Gastrocnemius medialis (tissue), 4 donors: ENCODE measurements at regions of chr14 and their contacts with region 1.

Region 1: DNA sequence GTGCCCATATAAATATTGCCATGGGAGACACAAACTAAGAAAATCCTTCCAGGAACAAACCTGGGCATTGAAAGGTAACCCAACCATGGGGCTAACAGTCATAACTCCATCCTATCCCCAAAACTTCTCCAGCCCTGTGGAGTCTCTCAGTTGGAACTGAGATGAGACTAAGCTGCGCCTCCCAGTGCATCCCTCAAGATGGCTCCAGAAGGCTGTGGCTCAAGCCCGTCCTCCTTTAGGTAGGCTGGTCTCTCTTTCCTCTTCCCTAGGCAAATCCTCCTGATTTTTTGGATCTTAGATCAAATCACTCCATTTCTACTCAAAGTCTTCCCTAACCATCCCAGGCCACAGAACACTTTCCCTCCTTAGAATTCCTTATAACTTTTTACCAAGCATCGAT is 364.3 kb upstream of the CCDC196 start:
- DNase-seq: no peak
- ATAC-seq: no peak
- H3K4me3 ChIP-seq: no peak overlapping the region
- H3K27ac ChIP-seq: no peak overlapping the region
- H3K4me1 ChIP-seq: no peaks in the 10 kb centered on the region
- H3K27me3 ChIP-seq: no peaks in the 10 kb centered on the region
- CTCF ChIP-seq: no peak
- POLR2A ChIP-seq: no peak

Region 2: GRCh38 chr14:65382586-65382985 is 739.3 kb before region 1 on chr14:
- in situ Hi-C with region 1: no loop called
- intact Hi-C with region 1: loop called (anchors 5 kb)
- DNase-seq: no peak
- ATAC-seq: no peak
- H3K4me3 ChIP-seq: no peak overlapping the region
- H3K27ac ChIP-seq: no peak overlapping the region
- H3K4me1 ChIP-seq: no peaks in the 10 kb centered on the region
- H3K27me3 ChIP-seq: no peaks in the 10 kb centered on the region
- CTCF ChIP-seq: no peak
- POLR2A ChIP-seq: no peak

Region 3: DNA sequence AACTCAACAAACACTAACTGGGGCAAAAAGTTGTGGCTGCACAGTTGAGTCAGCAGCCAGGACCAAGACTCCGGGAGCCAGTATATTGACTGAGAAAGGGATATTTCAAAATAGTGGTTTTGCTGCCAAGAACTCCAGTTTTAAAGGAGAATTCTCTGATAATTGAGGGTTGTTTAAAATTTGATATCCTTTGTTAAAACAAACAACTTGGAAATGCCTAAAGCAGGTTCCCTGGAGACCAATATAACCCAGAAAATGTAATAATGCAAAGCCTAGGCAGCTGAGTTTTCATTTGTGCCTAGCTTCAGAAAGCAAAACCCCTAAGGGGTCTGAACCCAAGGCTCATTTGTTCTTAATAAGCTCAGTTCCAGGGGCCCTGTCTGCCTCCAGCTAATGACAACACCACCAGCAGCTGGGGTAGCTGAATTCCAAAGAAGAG is 52.6 kb after region 1 on chr14:
- in situ Hi-C with region 1: no loop called
- intact Hi-C with region 1: no loop called
- DNase-seq: no peak
- ATAC-seq: no peak
- H3K4me3 ChIP-seq: no peak overlapping the region
- H3K27ac ChIP-seq: no peak overlapping the region
- H3K4me1 ChIP-seq: no peaks in the 10 kb centered on the region
- H3K27me3 ChIP-seq: no peaks in the 10 kb centered on the region
- CTCF ChIP-seq: no peak
- POLR2A ChIP-seq: no peak